Psoas muscle (tissue), 8 donors: ENCODE measurements at regions of chr2 and their contacts with region 1.

Region 1: GRCh38 chr2:240149943-240150784 is 9.7 kb upstream of the OTOS start:
- DNase-seq: peak in 1 of 2 donors; percentile 24
- ATAC-seq: peak; percentile 56 to 75 (median 69)
- H3K4me3 ChIP-seq: no peak overlapping the region
- H3K27ac ChIP-seq: no peak overlapping the region
- H3K4me1 ChIP-seq: no peaks in the 10 kb centered on the region
- H3K27me3 ChIP-seq: no peaks in the 10 kb centered on the region
- CTCF ChIP-seq: peak; percentile 64

Region 2: DNA sequence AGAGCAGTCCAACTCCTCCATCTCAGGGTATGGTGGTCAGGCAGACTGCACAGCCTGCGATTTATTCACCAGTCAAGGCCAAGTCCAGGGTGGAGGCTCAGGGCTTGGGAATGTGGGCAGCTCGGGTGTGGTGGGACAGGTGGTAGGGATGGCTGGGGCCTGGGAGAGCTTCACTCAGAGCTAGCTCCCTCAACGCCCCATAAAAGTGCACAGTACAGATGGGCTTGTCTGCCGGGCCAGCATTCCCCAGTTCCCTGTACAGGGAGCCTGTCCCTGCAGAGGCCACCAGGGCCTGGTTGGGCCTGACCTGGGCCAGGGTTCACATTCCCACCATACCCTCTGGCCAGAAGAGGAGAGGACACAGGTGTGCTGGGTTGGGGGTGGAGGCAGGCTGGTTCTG is 39.5 kb after region 1 on chr2:
- intact Hi-C with region 1: loop called in 1 of 2 experiments (anchors 5 kb)
- DNase-seq: no peak
- ATAC-seq: no peak
- H3K4me3 ChIP-seq: no peak overlapping the region
- H3K27ac ChIP-seq: no peak overlapping the region
- H3K4me1 ChIP-seq: peaks cover 28% of the 10 kb centered on the region
- H3K27me3 ChIP-seq: no peaks in the 10 kb centered on the region
- CTCF ChIP-seq: no peak